Dorsolateral prefrontal cortex (tissue), 120 donors: ENCODE measurements at regions of chr22 and their contacts with region 1.

Region 1: GRCh38 chr22:38681784-38682335 is at the start of gene TOMM22:
- DNase-seq: peak; percentile 79 to 95 (median 90)
- H3K4me3 ChIP-seq: peak within 1 kb of the TSS; percentile 66 to 100 (median 97)
- H3K27ac ChIP-seq: peak within 1 kb of the TSS in 56 of 59 donors; percentile 30 to 93 (median 79)
- H3K27me3 ChIP-seq: no peaks in the 10 kb centered on the region
- CTCF ChIP-seq: peak; percentile 68 to 95 (median 88)
- total RNA-seq, gene TOMM22: 26.7 to 64.2 (median 47.2) TPM

Region 2: DNA sequence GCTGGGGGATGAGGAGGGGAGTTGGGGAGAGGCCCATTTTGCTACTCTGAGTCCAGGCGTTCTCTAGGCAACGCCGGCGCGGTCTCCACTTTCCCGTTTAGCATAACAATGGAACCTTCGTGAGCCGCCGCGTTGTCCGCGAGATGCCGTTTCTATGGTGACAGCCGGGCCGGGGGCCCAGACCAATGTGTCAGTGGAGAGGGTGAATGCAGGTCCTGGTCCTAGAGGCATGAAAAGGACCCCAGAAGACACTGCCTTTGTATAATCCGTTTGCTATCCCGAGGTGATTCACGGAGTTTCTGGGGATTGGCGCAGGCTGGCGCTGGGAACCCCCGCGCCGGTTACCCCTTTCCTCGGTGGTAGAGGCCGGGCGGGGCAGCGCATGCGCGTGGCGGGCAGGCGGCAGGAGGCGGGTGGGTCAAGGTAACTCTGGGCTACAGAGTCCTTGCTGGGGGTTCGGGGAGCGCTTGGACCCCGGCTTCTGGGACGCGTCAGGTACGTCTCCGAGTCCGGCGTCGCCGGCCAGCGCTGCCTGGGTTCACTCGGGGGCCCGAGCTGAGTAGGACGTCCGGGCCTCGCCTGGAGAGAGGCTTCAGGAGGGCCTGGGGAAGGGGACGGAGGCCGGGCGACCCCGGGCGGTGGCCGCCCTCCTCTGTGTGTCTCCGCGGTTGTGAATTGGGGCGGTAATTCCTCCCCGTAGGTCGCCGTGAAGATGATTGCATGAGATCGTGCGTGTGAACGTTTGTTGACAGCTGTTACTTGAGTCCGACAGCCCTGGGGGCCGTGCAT is 25.4 kb before region 1 on chr22 and contains the starts of genes CBY1 and FAM227A:
- intact Hi-C with region 1: loop called in 1 of 2 experiments (anchors 1 kb)
- DNase-seq: peak; percentile 81 to 94 (median 90)
- H3K4me3 ChIP-seq: peak within 1 kb of the TSS; percentile 73 to 100 (median 95)
- H3K27ac ChIP-seq: peak within 1 kb of the TSS; percentile 89 to 100 (median 98)
- H3K27me3 ChIP-seq: no peaks in the 10 kb centered on the region
- CTCF ChIP-seq: peak in 12 of 56 donors; percentile 5 to 42 (median 10)
- total RNA-seq, gene CBY1: 19.3 to 46.5 (median 29.4) TPM
- total RNA-seq, gene FAM227A: 2.2 to 24.9 (median 6.9) TPM